H1 (cell line): ENCODE measurements at regions of chr11 and their contacts with region 1.

Region 1: GRCh38 chr11:12288212-12288930 is 89.0 kb upstream of the PARVA start:
- DNase-seq: peak; percentile 82 to 95
- H3K4me3 ChIP-seq: no peak overlapping the region
- H3K27ac ChIP-seq: no peak overlapping the region
- H3K4me1 ChIP-seq: peaks cover 0 to 4% (median 3%) of the 10 kb centered on the region in 4 experiments; a peak in 3 of 7 replicates
- H3K27me3 ChIP-seq: no peaks in the 10 kb centered on the region
- CTCF ChIP-seq: peak; percentile 87 to 93 (median 91)
- EP300 ChIP-seq: no peak
- POLR2A ChIP-seq: no peak
- RAD21 ChIP-seq: peak; percentile 93 to 97

Region 2: DNA sequence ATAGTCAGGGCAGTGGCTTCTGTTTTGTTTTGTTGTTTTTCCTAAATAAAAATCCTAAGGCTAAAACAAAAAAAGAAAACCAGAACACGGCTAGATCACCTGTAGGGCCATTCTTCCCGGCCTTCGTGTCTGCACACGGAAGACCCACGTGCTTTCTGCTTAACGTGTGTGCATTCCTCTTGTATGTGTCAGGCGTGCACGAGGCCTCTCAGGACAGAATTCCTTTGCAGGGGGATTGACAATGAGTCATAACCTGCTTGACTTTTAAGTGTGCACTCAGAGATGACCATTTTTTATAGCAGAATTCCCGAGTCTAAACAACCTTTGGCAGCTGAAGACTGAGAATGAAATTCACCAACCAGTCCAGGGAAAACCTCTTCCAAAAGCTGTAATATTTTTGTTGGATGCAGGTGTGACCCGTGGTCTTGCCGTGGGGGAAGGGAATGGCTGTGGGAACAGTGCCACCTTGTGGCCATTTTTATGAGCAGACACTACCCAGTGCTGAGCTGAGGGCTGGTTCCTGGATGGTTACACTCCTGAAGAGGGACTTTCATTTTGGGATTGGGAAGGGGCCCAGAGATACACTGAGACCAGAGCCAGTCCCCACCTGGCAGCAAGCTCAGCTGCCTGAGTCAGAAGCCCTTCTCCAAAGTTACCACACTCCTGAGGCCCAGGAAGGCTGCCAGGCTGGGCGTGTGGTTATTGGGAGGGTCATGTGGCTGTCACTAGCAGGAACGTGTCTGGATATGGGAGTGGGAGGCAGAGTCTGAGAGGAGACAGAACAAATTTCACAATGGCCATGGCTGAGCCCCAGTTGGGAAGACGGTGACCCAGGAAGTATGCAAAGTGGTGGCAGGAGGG is 244.2 kb before region 1 on chr11:
- CTCF ChIA-PET with region 1: interaction called, 403 read pairs
- POLR2A ChIA-PET with region 1: no interaction called
- DNase-seq: peak; percentile 27 to 87
- H3K4me3 ChIP-seq: no peak overlapping the region
- H3K27ac ChIP-seq: no peak overlapping the region
- H3K4me1 ChIP-seq: no peaks in the 10 kb centered on the region
- H3K27me3 ChIP-seq: no peaks in the 10 kb centered on the region; a peak in 2 of 7 replicates
- CTCF ChIP-seq: peak; percentile 89 to 93 (median 91)
- EP300 ChIP-seq: no peak
- POLR2A ChIP-seq: no peak
- RAD21 ChIP-seq: peak; percentile 95 to 96

Region 3: GRCh38 chr11:12087075-12088004 is 201.0 kb before region 1 on chr11:
- CTCF ChIA-PET with region 1: interaction called, 15 read pairs
- POLR2A ChIA-PET with region 1: interaction called, 3 read pairs
- DNase-seq: no peak
- H3K4me3 ChIP-seq: no peak overlapping the region
- H3K27ac ChIP-seq: no peak overlapping the region
- H3K4me1 ChIP-seq: peaks cover under 1 to 6% (median 6%) of the 10 kb centered on the region in 4 experiments
- H3K27me3 ChIP-seq: no peaks in the 10 kb centered on the region
- CTCF ChIP-seq: peak in 1 of 3 experiments; percentile 7; a peak in 1 of 4 replicates
- EP300 ChIP-seq: no peak
- POLR2A ChIP-seq: no peak
- RAD21 ChIP-seq: no peak

Region 4: GRCh38 chr11:12213920-12214319 is 74.5 kb before region 1 on chr11:
- CTCF ChIA-PET with region 1: no interaction called
- POLR2A ChIA-PET with region 1: no interaction called
- DNase-seq: no peak
- H3K4me3 ChIP-seq: no peak overlapping the region
- H3K27ac ChIP-seq: no peak overlapping the region
- H3K4me1 ChIP-seq: peaks cover 0 to 5% (median 0%) of the 10 kb centered on the region in 4 experiments; a peak in 2 of 7 replicates
- H3K27me3 ChIP-seq: no peaks in the 10 kb centered on the region
- CTCF ChIP-seq: no peak
- EP300 ChIP-seq: no peak
- POLR2A ChIP-seq: no peak
- RAD21 ChIP-seq: no peak

Region 5: DNA sequence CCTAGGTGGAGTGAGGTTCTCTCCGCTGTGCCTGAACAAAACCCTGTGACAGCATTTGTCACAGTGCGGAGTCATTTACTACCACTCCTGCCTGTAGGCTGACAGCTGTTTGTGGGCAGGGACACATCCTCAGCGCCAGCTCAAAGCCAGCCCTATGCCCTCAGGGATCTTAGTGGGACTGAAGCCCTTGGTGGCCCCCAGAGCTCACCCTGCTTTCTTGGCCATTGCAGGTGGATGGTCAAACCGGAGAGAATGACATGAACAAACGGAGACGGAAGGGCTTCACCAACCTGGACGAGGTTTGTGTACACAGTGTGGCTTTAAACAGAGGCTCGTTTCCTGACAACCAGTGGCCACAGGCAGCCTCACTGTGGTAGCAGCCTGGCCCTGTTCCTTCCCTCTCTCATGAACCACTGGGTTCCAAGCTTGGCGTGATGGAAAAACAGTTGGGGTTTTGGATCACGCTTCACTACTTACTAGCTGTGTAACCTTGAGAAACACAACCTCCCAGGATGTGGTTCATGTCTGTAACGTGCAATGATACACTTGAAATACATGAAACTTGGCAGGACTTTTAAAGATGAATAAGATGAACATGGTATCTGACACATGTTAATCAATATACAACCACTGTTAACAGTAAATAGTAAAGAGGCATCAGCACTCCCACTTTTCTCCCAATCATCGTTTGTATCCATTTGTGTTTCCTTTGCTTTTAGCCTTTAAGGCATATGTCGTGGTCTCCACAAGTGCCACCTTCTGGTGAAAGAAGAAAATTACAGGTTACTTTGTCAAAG is 52.2 kb before region 1 on chr11:
- CTCF ChIA-PET with region 1: interaction called, 17 read pairs
- POLR2A ChIA-PET with region 1: no interaction called
- DNase-seq: no peak
- H3K4me3 ChIP-seq: no peak overlapping the region
- H3K27ac ChIP-seq: no peak overlapping the region
- H3K4me1 ChIP-seq: no peaks in the 10 kb centered on the region; a peak in 1 of 7 replicates
- H3K27me3 ChIP-seq: no peaks in the 10 kb centered on the region
- CTCF ChIP-seq: peak in 2 of 3 experiments; percentile 56 to 67; a peak in 2 of 4 replicates
- EP300 ChIP-seq: no peak
- POLR2A ChIP-seq: no peak
- RAD21 ChIP-seq: peak; percentile 62 to 73

Region 6: DNA sequence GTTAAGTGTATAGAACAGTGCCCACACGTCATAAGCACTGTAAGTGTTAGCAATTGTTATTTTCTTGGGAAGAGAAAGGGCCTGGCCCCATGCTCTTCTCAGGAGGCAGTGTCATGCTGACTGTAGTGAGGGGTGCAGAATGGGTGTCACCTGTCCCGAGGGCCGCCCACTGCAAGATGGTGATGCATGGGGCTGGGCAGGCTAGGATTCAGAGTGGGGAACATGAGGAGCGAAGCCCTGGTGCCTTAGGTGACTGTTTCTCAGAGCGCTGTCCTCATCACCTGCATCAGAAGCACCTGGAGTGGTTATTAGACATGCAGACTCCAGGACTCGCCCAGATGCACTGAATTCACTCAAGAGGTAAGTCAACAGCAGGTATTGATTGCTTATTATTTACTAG is 12.0 kb before region 1 on chr11:
- CTCF ChIA-PET with region 1: interaction called, 37 read pairs
- POLR2A ChIA-PET with region 1: no interaction called
- DNase-seq: no peak
- H3K4me3 ChIP-seq: no peak overlapping the region
- H3K27ac ChIP-seq: no peak overlapping the region
- H3K4me1 ChIP-seq: peaks cover 0 to 6% (median 0%) of the 10 kb centered on the region in 4 experiments; a peak in 2 of 7 replicates
- H3K27me3 ChIP-seq: no peaks in the 10 kb centered on the region
- CTCF ChIP-seq: no peak
- EP300 ChIP-seq: no peak
- POLR2A ChIP-seq: no peak
- RAD21 ChIP-seq: no peak

Region 7: DNA sequence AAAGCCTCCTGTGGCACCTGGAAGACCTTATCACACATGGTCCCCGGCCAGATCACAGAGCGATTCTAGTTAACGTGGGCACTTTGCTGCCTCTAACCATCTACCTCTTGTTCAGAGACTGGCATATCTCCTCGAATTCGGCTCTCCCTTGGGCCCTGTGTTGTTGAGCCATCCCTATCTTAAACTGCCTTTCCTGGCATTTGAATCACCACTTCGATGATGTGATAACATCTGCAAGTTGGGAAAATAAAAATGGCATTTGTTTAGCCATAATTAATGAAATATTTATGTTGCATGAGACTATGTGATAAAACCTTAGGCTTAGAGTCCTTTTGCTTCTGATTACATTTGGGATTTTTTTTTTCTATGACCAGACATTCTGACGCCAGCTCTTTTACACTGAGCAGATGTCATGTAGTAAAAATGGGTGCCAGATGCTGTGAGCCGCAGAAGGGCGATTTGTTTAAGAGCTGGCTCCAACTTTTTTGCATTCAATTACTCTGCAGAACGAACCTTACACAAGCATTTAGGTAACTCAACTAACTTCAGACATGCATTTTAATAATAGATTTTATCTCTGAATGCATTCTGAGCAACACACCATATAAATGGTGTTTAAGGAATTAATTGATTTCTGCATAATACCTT is 30.5 kb after region 1 on chr11:
- CTCF ChIA-PET with region 1: interaction called, 25 read pairs
- POLR2A ChIA-PET with region 1: no interaction called
- DNase-seq: no peak
- H3K4me3 ChIP-seq: no peak overlapping the region
- H3K27ac ChIP-seq: no peak overlapping the region
- H3K4me1 ChIP-seq: peaks cover 0 to 9% (median 0%) of the 10 kb centered on the region in 4 experiments; a peak in 3 of 7 replicates
- H3K27me3 ChIP-seq: no peaks in the 10 kb centered on the region
- CTCF ChIP-seq: no peak
- EP300 ChIP-seq: no peak
- POLR2A ChIP-seq: no peak
- RAD21 ChIP-seq: no peak

Region 8: GRCh38 chr11:12377824-12378593 is 89.6 kb after region 1 on chr11:
- CTCF ChIA-PET with region 1: interaction called, 11 read pairs
- POLR2A ChIA-PET with region 1: no interaction called
- DNase-seq: peak; percentile 69 to 86
- H3K4me3 ChIP-seq: peak overlapping the region; percentile 72 to 98 (median 83)
- H3K27ac ChIP-seq: peak overlapping the region; percentile 83
- H3K4me1 ChIP-seq: peaks cover 0 to 6% (median 2%) of the 10 kb centered on the region in 4 experiments; a peak in 3 of 7 replicates
- H3K27me3 ChIP-seq: peaks cover 2 to 12% (median 8%) of the 10 kb centered on the region in 4 experiments
- CTCF ChIP-seq: peak; percentile 2 to 47 (median 19)
- EP300 ChIP-seq: no peak
- POLR2A ChIP-seq: peak; percentile 67 to 68
- RAD21 ChIP-seq: peak; percentile 25 to 43; a peak in 3 of 4 replicates

Region 9: DNA sequence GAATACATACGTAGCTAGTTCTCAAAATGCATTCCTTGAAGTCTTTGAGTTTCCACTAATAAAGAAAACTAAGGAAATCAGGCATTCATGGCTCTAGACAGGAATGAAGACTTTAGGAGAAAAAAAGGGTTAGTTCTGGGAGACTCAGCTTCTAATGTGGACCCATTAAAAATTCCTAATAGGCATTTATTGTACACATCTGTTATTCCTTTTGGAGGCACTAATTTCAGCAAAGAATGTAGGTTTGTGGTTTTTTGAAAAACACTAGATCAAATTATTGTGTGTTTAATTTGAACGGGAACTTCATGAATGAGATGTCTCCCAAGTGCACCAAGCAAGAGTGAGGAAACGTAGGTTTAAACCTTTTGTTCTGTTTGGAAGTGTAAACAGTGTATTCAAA is 131.7 kb after region 1 on chr11:
- CTCF ChIA-PET with region 1: no interaction called
- POLR2A ChIA-PET with region 1: no interaction called
- DNase-seq: no peak
- H3K4me3 ChIP-seq: no peak overlapping the region
- H3K27ac ChIP-seq: no peak overlapping the region
- H3K4me1 ChIP-seq: peaks cover 0 to 3% (median 0%) of the 10 kb centered on the region in 4 experiments; a peak in 1 of 7 replicates
- H3K27me3 ChIP-seq: no peaks in the 10 kb centered on the region
- CTCF ChIP-seq: no peak
- EP300 ChIP-seq: no peak
- POLR2A ChIP-seq: no peak
- RAD21 ChIP-seq: no peak

Region 10: GRCh38 chr11:12461516-12461915 is 173.1 kb after region 1 on chr11:
- CTCF ChIA-PET with region 1: no interaction called
- POLR2A ChIA-PET with region 1: no interaction called
- DNase-seq: no peak
- H3K4me3 ChIP-seq: no peak overlapping the region
- H3K27ac ChIP-seq: no peak overlapping the region
- H3K4me1 ChIP-seq: no peaks in the 10 kb centered on the region
- H3K27me3 ChIP-seq: peaks cover 0 to 1% (median 0%) of the 10 kb centered on the region in 4 experiments; a peak in 1 of 7 replicates
- CTCF ChIP-seq: no peak
- EP300 ChIP-seq: no peak
- POLR2A ChIP-seq: no peak
- RAD21 ChIP-seq: no peak